IMR-90 (cell line): ENCODE measurements at regions of chr2 and their contacts with region 1.

Region 1: GRCh38 chr2:176653479-176654443 is 384.5 kb downstream of the MTX2 start:
- DNase-seq: peak; percentile 55
- ATAC-seq: peak; percentile 86
- H3K4me3 ChIP-seq: no peak overlapping the region
- H3K27ac ChIP-seq: no peak overlapping the region
- H3K4me1 ChIP-seq: no peaks in the 10 kb centered on the region
- H3K27me3 ChIP-seq: no peaks in the 10 kb centered on the region; the same call in 1 of the 2 replicates
- CTCF ChIP-seq: peak; percentile 59
- POLR2A ChIP-seq: no peak
- RAD21 ChIP-seq: no peak; the same call in 1 of the 2 replicates

Region 2: DNA sequence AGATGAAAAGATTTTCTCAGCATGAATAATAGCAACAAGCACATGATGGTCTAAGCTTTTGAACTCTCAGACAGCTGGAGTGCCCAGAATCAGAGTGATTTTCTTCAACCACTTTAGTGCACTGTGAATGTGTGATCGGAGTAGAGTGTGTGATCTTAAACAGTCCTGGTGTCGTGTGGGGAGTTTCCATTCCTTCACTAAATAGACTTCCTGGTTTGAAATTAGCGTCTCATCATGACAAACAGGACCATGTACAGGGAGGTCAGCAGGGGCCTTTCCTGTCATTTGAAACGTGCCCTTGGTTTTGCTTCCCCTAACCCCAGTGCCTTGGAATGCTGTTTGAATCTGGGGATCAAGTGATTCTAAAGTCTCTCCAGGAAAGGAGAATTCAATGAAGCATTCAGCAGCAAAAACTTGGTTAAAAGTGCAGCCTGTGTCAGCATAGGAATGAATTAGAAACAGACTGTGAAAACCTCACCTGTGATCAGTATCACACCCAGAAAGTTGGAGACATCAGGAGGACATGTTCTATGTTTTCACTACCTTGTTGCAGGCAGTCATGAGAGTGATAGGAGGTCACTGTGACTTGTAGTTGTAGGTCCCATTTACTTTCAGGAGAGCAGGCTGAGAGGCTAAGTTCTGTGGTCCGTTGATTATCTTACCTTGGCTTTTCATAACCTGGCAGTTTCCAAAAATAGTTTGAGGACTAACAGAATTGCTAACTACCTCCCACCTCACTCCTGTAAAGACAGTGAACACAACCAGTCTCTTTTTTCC is 15.8 kb after region 1 on chr2:
- CTCF ChIA-PET with region 1: interaction called, 10 read pairs
- POLR2A ChIA-PET with region 1: no interaction called
- dilution Hi-C with region 1: no loop called
- in situ Hi-C with region 1: no loop called
- intact Hi-C with region 1: no loop called
- DNase-seq: no peak
- ATAC-seq: no peak
- H3K4me3 ChIP-seq: no peak overlapping the region
- H3K27ac ChIP-seq: no peak overlapping the region
- H3K4me1 ChIP-seq: no peaks in the 10 kb centered on the region
- H3K27me3 ChIP-seq: no peaks in the 10 kb centered on the region; the same call in 1 of the 2 replicates
- CTCF ChIP-seq: no peak
- POLR2A ChIP-seq: no peak
- RAD21 ChIP-seq: no peak

Region 3: GRCh38 chr2:177148477-177149154 is 494.9 kb after region 1 on chr2:
- CTCF ChIA-PET with region 1: interaction called, 4 read pairs
- POLR2A ChIA-PET with region 1: no interaction called
- dilution Hi-C with region 1: no loop called
- in situ Hi-C with region 1: no loop called
- intact Hi-C with region 1: loop called (anchors 5 kb)
- DNase-seq: peak; percentile 66
- ATAC-seq: peak; percentile 99
- H3K4me3 ChIP-seq: peak overlapping the region; percentile 71
- H3K27ac ChIP-seq: no peak overlapping the region
- H3K4me1 ChIP-seq: no peaks in the 10 kb centered on the region
- H3K27me3 ChIP-seq: peaks cover 19% of the 10 kb centered on the region
- CTCF ChIP-seq: peak; percentile 80
- POLR2A ChIP-seq: no peak
- RAD21 ChIP-seq: peak; percentile 43

Region 4: DNA sequence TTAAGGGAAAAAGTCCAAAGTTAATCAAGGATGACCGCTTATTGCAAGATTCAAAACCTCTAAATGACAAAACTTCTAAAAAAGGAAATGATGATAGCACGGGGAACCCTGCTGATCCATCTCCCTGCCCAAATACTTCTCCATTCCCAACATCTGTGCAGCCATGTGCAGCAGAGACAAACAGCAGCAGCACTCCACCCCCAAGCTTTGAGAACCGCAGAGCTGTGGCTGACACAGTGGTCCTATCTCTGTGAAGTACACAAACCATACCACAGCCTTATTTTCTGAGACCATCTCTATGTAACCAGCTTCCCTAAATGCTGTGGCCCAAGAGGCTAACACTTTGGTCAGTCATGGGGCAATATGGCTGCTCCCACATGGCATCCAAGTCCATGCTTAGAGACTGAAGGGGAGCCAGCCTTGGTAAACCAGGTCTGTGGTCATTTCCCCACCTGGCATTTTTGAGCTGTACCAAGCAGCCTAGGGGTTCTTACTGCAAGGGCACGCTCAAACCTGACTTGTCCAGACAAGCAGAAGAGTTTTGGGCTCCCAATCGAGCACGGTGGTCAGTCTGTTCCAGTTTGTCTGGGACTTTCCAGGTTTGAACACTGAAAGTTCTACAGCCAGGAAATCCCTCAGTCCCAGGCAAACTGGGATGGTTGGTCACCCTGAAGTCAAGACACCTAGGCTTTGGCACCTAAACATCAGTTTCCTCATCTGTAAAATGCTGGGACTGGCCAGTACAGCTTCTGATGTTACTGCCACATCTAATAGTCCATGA is 627.8 kb after region 1 on chr2:
- CTCF ChIA-PET with region 1: no interaction called
- POLR2A ChIA-PET with region 1: no interaction called
- dilution Hi-C with region 1: no loop called
- in situ Hi-C with region 1: no loop called
- intact Hi-C with region 1: no loop called
- DNase-seq: no peak
- ATAC-seq: no peak
- H3K4me3 ChIP-seq: no peak overlapping the region
- H3K27ac ChIP-seq: peak overlapping the region; percentile 49; the same call in 1 of the 2 replicates
- H3K4me1 ChIP-seq: peaks cover 25% of the 10 kb centered on the region
- H3K27me3 ChIP-seq: no peaks in the 10 kb centered on the region
- CTCF ChIP-seq: no peak
- POLR2A ChIP-seq: no peak
- RAD21 ChIP-seq: no peak